Activated CD4-positive, alpha-beta memory T cell treated with anti-CD3 and anti-CD28 coated beads, Interleukin-2, amount 10 ng/mL, durations not matched to agents 7 days and 5 days (primary cell): ENCODE measurements at regions of chr5 and their contacts with region 1.

Region 1: GRCh38 chr5:134503088-134503946 is 22.2 kb upstream of the JADE2 start:
- DNase-seq: peak; percentile 85
- H3K4me3 Mint-ChIP-seq: peak overlapping the region; percentile 43
- H3K27ac Mint-ChIP-seq: peak overlapping the region; percentile 96
- H3K4me1 Mint-ChIP-seq: peaks cover 50% of the 10 kb centered on the region
- H3K27me3 Mint-ChIP-seq: no peaks in the 10 kb centered on the region

Region 2: GRCh38 chr5:134370871-134371833 is 132.2 kb before region 1 on chr5 and contains the start of gene UBE2B:
- CTCF ChIA-PET with region 1: no interaction called
- POLR2A ChIA-PET with region 1: interaction called, 10 read pairs
- DNase-seq: peak; percentile 98
- H3K4me3 Mint-ChIP-seq: peak within 1 kb of the TSS; percentile 97
- H3K27ac Mint-ChIP-seq: peak within 1 kb of the TSS; percentile 98
- H3K4me1 Mint-ChIP-seq: peaks cover 46% of the 10 kb centered on the region
- H3K27me3 Mint-ChIP-seq: peaks cover 2% of the 10 kb centered on the region
- total RNA-seq, gene UBE2B: 115 to 116 TPM

Region 3: GRCh38 chr5:134465816-134466240 is 37.5 kb before region 1 on chr5:
- CTCF ChIA-PET with region 1: no interaction called
- POLR2A ChIA-PET with region 1: interaction called, 11 read pairs
- DNase-seq: peak; percentile 67
- H3K4me3 Mint-ChIP-seq: peak overlapping the region; percentile 72
- H3K27ac Mint-ChIP-seq: peak overlapping the region; percentile 68
- H3K4me1 Mint-ChIP-seq: peaks cover 15% of the 10 kb centered on the region
- H3K27me3 Mint-ChIP-seq: peaks cover 4% of the 10 kb centered on the region